OCI-LY7 (cell line): ENCODE measurements at regions of chr9 and their contacts with region 1.

Region 1: DNA sequence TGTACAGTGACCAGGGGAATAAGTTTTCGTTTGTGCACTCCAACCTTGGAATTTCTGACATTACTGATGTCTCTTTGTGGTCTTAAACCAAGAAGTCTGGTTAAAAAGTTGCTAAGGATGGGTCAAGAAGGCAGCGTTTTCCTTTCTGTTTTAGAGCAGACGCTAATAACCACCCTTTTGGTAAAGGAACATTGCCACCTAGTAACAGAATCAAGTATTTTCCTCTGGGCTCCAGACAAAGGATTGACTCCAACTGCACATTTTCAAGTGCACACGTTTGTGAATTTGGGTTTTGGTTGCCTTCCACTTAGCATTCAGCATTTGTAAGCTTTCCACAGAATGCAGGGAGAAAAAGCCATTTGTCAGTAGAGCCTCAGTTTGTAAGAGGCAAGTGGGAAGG is 22.2 kb upstream of the CEP78 start:
- DNase-seq: peak; percentile 57
- H3K4me3 ChIP-seq: no peak overlapping the region
- H3K27ac ChIP-seq: no peak overlapping the region
- H3K4me1 ChIP-seq: peaks cover 54% of the 10 kb centered on the region
- CTCF ChIP-seq: peak; percentile 81

Region 2: DNA sequence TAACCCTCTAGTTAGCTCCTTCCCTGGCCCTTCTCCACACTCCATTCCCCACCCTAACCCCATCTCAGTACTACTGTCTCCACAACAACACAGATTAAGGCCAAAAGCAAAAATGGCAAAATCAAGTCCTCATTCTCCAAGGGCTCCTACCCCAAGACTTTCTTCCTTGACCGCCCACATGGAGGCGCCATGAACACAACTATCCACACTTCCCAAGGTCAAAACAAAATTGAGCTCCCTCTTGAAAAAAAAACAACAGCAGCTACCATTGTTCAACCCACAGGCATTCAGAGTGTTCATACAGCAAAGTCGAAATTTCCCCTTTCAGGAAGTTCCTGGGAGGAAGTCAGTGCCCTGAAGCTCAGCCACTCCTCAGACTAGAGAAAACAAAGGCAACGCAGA is 236.5 kb before region 1 on chr9:
- CTCF ChIA-PET with region 1: no interaction called
- POLR2A ChIA-PET with region 1: interaction called, 3 read pairs
- intact Hi-C with region 1: loop called (anchors 1 kb)
- DNase-seq: peak; percentile 34
- H3K4me3 ChIP-seq: no peak overlapping the region
- H3K27ac ChIP-seq: no peak overlapping the region
- H3K4me1 ChIP-seq: no peaks in the 10 kb centered on the region
- CTCF ChIP-seq: peak; percentile 79

Region 3: DNA sequence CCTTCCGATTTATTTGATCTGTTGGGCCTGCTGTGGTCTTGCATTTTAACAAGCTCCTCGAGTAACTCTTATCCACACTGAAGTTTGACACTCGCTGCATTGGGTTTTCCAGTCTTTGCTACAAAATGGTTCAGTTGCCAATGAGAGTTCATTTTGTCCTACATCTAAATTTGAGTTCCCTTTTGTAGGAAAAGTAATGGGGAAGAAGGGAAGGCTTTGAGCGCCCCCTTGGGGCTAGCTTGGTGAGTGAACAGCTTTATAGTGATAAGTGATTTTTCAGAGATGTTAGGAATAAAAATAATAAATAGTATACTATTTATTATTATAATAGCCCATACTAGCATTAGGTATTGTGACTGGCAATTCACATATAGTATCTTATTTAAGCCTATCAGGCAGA is 92.2 kb before region 1 on chr9:
- CTCF ChIA-PET with region 1: no interaction called
- POLR2A ChIA-PET with region 1: no interaction called
- intact Hi-C with region 1: loop called (anchors 2 kb)
- DNase-seq: peak; percentile 36
- H3K4me3 ChIP-seq: no peak overlapping the region
- H3K27ac ChIP-seq: no peak overlapping the region
- H3K4me1 ChIP-seq: peaks cover 7% of the 10 kb centered on the region
- CTCF ChIP-seq: peak; percentile 83

Region 4: GRCh38 chr9:78130004-78130403 is 83.7 kb before region 1 on chr9:
- CTCF ChIA-PET with region 1: no interaction called
- POLR2A ChIA-PET with region 1: interaction called, 4 read pairs
- intact Hi-C with region 1: loop called (anchors 2 kb)
- DNase-seq: peak; percentile 40
- H3K4me3 ChIP-seq: no peak overlapping the region
- H3K27ac ChIP-seq: no peak overlapping the region
- H3K4me1 ChIP-seq: peaks cover 19% of the 10 kb centered on the region
- CTCF ChIP-seq: peak; percentile 73